ENCODE measurements at regions of chr2 and their contacts with region 1.

Region 1: GRCh38 chr2:72770879-72771461 is 54.9 kb downstream of the EXOC6B start:
- DNase-seq: peak in 1 of 3 donors; percentile 93
- ATAC-seq: peak; percentile 78
- H3K4me3 ChIP-seq: no peak overlapping the region
- H3K4me1 ChIP-seq: no peaks in the 10 kb centered on the region
- CTCF ChIP-seq: peak; percentile 54

Region 2: DNA sequence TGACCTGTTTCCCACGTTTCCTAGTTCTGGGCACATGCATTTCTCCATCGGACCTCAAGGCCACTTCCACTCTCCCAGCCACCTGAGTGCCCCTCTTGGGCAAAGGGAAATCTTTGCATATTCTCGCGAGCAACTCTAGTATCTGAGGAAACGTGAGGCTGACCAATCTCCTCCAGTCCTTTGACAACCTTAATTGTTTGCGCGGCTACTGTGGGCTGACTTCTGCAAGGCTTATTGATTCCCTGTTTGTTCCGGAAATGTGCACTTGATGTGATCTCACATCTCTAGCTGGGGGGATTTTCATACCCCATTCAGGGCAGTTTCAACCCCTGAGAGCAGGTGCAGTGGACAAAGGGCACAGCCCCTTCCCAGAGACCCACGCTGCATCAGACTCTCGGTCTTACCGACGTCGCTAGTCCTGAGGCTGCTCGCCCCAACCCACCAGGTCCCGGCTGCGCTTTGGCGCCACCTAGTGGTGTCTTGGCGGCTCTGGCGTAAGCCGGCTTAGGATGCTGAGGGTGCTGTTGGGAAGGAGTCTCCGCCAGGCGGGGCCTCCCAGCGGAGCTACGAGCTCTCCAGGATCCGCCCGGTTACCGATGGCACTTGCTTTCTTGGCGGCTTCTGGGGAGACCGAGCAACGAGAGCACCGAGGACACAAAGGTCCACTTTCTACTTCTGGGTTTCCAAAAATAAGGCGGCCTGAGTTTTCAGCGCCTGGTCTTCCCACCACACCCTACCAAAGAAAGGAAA is 91.4 kb after region 1 on chr2:
- intact Hi-C with region 1: loop called (anchors 5 kb)
- DNase-seq: peak; percentile 85 to 93 (median 92)
- ATAC-seq: peak; percentile 100
- H3K4me3 ChIP-seq: no peak overlapping the region
- H3K4me1 ChIP-seq: peaks cover 8% of the 10 kb centered on the region
- CTCF ChIP-seq: peak; percentile 99

Measured in mucosa of descending colon (tissue), 3 donors.